Activated CD8-positive, alpha-beta T cell treated with anti-CD3 and anti-CD28 coated beads, Interleukin-2, amount 10 ng/mL, durations not matched to agents 7 days and 5 days (primary cell): ENCODE measurements at regions of chr22 and their contacts with region 1.

Region 1: DNA sequence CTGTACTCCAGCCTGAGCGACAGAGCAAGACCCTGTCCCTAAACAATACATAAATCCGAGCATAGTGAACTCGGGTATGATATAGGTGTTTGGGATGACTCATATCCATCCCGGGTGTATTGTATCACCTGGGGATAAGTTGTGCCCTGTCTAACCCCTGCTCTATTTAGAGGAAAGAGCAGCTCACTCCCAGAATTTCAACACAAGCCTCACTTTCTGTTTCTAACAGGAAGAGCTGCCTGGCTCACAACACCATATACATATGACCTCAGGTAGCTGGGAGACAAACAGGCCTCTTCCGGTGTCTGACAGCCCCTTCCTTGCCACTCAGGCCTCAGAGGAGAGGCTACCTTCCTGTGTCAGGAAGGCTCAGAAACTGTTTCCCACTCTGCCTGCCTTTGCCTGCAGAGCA is 9.9 kb upstream of the MICALL1 start:
- DNase-seq: peak; percentile 77
- ATAC-seq: peak; percentile 98
- H3K4me3 Mint-ChIP-seq: peak overlapping the region; percentile 61
- H3K27ac Mint-ChIP-seq: peak overlapping the region; percentile 96
- H3K4me1 Mint-ChIP-seq: peaks cover 40% of the 10 kb centered on the region
- H3K27me3 Mint-ChIP-seq: no peaks in the 10 kb centered on the region

Region 2: DNA sequence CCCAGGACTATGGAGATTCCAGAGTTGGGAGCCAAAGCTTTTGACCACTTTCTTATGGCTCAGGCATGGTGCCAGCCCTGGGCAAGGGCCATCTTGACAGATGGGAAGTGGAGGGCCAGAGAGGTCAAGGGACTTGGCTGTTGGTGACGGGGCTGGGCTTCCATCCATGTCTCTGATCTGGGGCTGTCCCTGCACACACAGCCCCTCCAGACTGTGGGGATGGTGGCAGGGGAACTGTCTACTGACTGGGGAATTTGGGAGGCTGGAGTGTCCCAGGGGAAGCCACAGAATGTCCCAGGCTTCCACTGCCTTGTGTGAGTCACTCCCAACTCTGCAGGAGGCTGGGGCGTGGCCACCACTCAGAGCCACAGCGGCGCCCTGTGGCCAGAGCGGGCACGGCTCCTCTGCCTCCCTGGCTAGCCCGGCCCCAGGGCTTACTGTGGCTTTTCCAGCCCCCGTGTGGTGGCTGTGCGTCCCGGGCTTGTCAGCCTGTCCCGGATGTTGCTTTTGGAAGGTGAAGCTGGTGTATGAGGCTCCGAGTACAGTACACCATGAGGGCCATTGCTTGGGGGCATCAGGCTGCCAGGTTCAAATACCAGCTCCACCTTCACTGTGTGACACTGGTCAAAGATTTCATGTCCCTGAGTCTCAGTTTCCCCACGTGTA is 37.7 kb after region 1 on chr22:
- CTCF ChIA-PET with region 1: interaction called, 18 read pairs
- POLR2A ChIA-PET with region 1: no interaction called
- DNase-seq: peak; percentile 90
- ATAC-seq: peak; percentile 99
- H3K4me3 Mint-ChIP-seq: no peak overlapping the region
- H3K27ac Mint-ChIP-seq: no peak overlapping the region
- H3K4me1 Mint-ChIP-seq: peaks cover 15% of the 10 kb centered on the region
- H3K27me3 Mint-ChIP-seq: no peaks in the 10 kb centered on the region